HEK293T (cell line): ENCODE measurements at regions of chr13 and their contacts with region 1.

Region 1: DNA sequence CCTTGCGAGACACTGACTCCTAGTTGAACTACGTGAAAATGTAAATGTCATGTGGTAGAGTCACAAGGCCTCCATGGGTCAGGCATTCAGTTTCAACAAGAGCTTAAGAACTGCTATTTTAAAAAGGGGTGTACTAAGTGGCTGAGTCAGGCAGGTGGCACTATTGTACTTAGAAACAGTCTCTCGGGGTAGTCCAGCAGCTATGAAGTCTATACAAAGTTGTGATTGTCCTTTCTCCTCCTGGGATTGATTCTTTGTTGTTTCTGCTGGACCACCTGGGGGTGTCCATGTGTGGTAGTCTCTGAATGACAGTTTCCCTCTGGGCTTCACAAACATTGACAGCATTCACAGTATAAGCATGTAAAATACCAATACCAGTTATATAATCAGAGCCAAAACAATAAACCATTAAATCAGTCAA is 33.0 kb downstream of the UGGT2 start:
- DNase-seq: peak; percentile 62

Region 2: GRCh38 chr13:95914991-95915501 is 105.1 kb before region 1 on chr13:
- CTCF ChIA-PET with region 1: no interaction called
- POLR2A ChIA-PET with region 1: no interaction called
- DNase-seq: no peak

Region 3: GRCh38 chr13:96141027-96141426 is 120.9 kb after region 1 on chr13:
- CTCF ChIA-PET with region 1: interaction called, 11 read pairs
- POLR2A ChIA-PET with region 1: no interaction called
- DNase-seq: no peak

Region 4: DNA sequence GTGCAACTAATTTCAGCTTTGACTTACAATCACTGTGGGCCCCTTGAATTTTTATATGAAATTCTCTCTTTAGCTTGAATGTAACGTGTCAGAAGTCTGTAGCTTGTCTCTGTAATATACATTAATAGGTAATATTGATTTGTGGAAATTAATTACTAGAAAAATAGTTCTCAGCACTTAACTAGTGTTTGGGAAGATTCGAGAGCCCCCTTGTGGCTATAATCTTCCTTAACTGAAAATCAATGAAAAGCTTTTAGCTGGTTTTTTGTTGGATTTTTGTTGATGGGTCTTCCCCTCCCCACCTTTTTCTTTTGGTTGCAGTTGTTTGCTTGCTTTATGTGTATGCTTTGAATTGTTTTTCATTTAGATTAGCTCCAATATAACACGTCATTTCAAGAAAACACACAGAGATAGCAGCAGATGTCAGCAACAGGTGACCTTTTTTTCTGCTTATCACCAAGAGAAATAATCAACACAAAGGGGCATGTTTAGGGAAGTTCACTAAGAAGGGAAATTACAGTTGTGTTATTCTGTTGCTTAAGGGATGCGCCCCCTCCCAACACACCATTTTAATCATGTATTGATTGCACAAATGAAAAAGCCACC is 797.3 kb after region 1 on chr13:
- CTCF ChIA-PET with region 1: interaction called, 20 read pairs
- POLR2A ChIA-PET with region 1: no interaction called
- DNase-seq: peak; percentile 7